AG04450 (cell line): ENCODE measurements at regions of chr3 and their contacts with region 1.

Region 1: DNA sequence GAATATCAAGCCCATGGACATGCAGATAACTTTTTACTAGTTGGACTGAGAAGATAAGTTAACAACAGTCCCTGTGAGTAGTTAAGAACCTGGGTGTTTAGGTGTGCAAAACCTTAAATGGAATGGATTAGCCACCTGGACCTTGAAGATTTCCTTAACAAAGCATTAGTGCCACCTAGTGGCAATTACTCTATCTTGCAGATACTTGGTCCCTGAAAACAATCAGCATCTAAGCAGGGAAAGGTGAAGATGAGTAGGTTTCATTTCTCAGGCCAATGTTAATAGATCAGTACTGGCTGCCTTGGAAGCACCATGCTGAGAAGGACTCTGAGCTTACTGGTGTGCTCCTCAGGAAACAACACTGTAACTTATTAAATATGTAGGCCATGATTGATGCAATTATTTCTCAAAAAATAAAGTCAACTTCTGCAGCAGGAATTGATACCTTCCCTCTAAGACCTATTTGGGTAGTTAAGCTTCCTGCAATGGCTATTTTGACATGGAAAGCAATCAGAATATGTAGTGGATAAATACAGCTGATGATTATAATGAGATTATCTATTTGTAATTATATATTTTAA is 329.4 kb downstream of the TBC1D5 start:
- DNase-seq: peak; percentile 21
- H3K4me3 ChIP-seq: no peak overlapping the region
- H3K27ac ChIP-seq: no peak overlapping the region
- H3K27me3 ChIP-seq: no peaks in the 10 kb centered on the region
- CTCF ChIP-seq: peak; percentile 86

Region 2: DNA sequence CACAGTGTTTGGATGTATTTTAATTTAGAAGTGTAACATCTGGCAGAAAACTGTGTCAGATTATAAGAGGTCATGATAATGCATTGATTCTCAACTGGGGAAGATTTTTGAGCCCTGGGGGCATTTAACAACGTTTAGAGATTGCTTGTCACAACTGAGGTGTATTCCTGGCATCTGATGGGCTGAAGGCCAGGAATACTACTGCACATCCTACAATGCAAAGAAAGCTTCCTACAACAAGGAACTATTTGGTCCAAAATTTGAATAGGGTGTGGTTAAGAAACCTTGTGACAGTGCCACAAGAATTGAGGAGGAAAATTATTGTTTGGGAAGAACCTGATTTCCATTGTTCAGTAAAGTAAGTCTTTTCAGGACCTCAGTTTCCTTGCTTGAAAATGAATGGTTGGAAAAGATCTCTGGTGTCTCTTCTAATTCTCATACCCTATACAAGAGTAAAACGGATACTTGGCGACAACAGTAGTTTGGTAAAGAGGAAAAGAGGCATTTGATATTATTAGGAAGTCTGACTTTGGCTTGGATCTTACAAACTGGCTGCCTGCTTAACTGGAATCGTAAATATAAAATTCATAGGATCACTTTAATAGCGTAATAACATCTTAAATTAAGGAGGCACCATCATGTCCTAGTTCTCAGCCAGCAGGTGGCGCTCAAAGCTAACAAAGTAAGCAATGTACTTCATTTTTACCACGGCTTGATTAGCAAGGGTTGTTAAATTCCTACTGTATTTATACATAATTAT is 812.1 kb before region 1 on chr3:
- CTCF ChIA-PET with region 1: interaction called, 38 read pairs
- POLR2A ChIA-PET with region 1: no interaction called
- DNase-seq: peak; percentile 68
- H3K4me3 ChIP-seq: no peak overlapping the region
- H3K27ac ChIP-seq: no peak overlapping the region
- H3K27me3 ChIP-seq: no peaks in the 10 kb centered on the region
- CTCF ChIP-seq: peak; percentile 83

Region 3: DNA sequence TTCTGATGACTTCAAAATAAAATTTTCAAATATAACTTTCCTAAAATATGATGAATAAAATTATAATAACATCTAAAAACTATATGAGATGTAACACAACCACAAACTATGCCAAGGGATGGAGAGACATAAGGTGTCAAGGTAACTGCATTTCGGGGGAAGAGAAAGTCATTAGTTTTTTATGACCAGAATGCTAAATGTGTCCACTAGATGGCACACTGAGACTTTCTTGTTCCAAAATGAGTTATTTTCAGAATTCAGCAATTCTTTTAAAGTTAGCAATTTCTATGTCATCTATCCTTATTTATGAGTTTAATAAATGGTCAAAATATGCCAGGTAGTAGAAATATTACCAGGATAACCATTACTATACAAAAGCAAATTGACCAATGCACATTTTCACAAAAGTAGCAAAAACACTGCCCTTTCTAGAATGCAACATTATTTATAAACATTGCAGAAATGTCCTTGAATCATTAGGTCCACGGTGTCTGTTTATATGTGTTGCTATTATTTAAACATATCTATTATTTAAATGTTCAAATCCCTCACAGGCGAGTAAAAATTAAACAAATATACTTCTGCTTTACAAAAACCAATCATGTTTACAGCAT is 154.1 kb before region 1 on chr3:
- CTCF ChIA-PET with region 1: interaction called, 36 read pairs
- POLR2A ChIA-PET with region 1: no interaction called
- DNase-seq: peak; percentile 6
- H3K4me3 ChIP-seq: no peak overlapping the region
- H3K27ac ChIP-seq: no peak overlapping the region
- H3K27me3 ChIP-seq: no peaks in the 10 kb centered on the region
- CTCF ChIP-seq: peak; percentile 77

Region 4: DNA sequence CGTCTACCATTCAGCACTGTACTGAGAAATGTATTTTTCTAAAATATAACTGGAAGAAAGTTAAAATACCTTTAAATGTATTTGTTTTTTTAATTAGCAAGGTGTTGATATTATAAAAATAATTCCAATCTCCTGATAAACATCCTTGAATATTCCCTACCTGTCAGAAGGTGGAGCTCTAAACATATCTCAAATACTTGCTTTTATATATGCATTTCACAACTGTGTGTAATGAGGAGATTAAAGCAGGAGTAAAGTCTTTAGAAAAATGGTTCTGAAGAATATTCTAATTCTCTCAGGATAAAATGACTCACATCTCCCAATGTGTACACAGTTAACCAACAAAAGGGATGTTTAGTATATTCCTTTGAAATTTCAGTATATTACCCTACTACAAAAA is 105.6 kb before region 1 on chr3:
- CTCF ChIA-PET with region 1: interaction called, 12 read pairs
- POLR2A ChIA-PET with region 1: no interaction called
- DNase-seq: no peak
- H3K4me3 ChIP-seq: no peak overlapping the region
- H3K27ac ChIP-seq: no peak overlapping the region
- H3K27me3 ChIP-seq: no peaks in the 10 kb centered on the region
- CTCF ChIP-seq: no peak

Region 5: GRCh38 chr3:17398959-17399551 is 14.0 kb before region 1 on chr3:
- CTCF ChIA-PET with region 1: interaction called, 16 read pairs
- POLR2A ChIA-PET with region 1: no interaction called
- DNase-seq: no peak
- H3K4me3 ChIP-seq: no peak overlapping the region
- H3K27ac ChIP-seq: no peak overlapping the region
- H3K27me3 ChIP-seq: no peaks in the 10 kb centered on the region
- CTCF ChIP-seq: no peak

Region 6: GRCh38 chr3:17423786-17424536 is 10.9 kb after region 1 on chr3:
- CTCF ChIA-PET with region 1: interaction called, 47 read pairs
- POLR2A ChIA-PET with region 1: no interaction called
- DNase-seq: no peak
- H3K4me3 ChIP-seq: no peak overlapping the region
- H3K27ac ChIP-seq: no peak overlapping the region
- H3K27me3 ChIP-seq: no peaks in the 10 kb centered on the region
- CTCF ChIP-seq: no peak

Region 7: GRCh38 chr3:17431004-17431403 is 18.0 kb after region 1 on chr3:
- CTCF ChIA-PET with region 1: interaction called, 16 read pairs
- POLR2A ChIA-PET with region 1: no interaction called
- DNase-seq: peak; percentile 3
- H3K4me3 ChIP-seq: no peak overlapping the region
- H3K27ac ChIP-seq: no peak overlapping the region
- H3K27me3 ChIP-seq: no peaks in the 10 kb centered on the region
- CTCF ChIP-seq: peak; percentile 51